ENCODE measurements at regions of chr1 and their contacts with region 1.

Region 1: GRCh38 chr1:44730741-44731512 is at the start of gene RNU5D-1:
- DNase-seq: peak; percentile 91
- ATAC-seq: peak; percentile 84
- H3K4me3 Mint-ChIP-seq: peak within 1 kb of the TSS; percentile 80
- H3K27ac Mint-ChIP-seq: peak within 1 kb of the TSS; percentile 99
- H3K4me1 Mint-ChIP-seq: peaks cover 33% of the 10 kb centered on the region
- H3K27me3 Mint-ChIP-seq: no peaks in the 10 kb centered on the region
- total RNA-seq, gene RNU5D-1: not detected

Region 2: DNA sequence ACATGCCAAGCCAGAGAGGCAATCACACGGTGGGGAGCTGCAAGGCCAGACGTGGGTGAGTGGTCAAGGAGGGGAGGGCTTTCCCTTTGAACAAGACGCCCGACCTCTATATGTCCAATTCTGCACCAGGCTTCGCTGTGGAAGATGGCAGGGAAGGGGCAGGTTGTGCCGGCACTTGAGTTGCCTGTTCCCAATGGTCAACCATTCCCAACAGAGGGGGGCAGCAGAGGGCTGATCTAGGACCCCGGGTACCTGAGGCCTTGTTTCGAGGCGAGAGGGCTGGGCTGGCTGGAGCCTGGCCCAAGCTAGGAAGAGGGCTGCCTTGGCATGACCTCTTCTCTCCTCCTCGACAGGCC is 121.5 kb before region 1 on chr1:
- POLR2A ChIA-PET with region 1: no interaction called
- DNase-seq: no peak
- ATAC-seq: no peak
- H3K4me3 Mint-ChIP-seq: no peak overlapping the region
- H3K27ac Mint-ChIP-seq: no peak overlapping the region
- H3K4me1 Mint-ChIP-seq: no peaks in the 10 kb centered on the region
- H3K27me3 Mint-ChIP-seq: peaks cover 2% of the 10 kb centered on the region

Region 3: GRCh38 chr1:44684525-44684924 is 46.4 kb before region 1 on chr1:
- POLR2A ChIA-PET with region 1: no interaction called
- DNase-seq: no peak
- ATAC-seq: peak; percentile 22
- H3K4me3 Mint-ChIP-seq: no peak overlapping the region
- H3K27ac Mint-ChIP-seq: no peak overlapping the region
- H3K4me1 Mint-ChIP-seq: peaks cover 9% of the 10 kb centered on the region
- H3K27me3 Mint-ChIP-seq: peaks cover 3% of the 10 kb centered on the region

Region 4: DNA sequence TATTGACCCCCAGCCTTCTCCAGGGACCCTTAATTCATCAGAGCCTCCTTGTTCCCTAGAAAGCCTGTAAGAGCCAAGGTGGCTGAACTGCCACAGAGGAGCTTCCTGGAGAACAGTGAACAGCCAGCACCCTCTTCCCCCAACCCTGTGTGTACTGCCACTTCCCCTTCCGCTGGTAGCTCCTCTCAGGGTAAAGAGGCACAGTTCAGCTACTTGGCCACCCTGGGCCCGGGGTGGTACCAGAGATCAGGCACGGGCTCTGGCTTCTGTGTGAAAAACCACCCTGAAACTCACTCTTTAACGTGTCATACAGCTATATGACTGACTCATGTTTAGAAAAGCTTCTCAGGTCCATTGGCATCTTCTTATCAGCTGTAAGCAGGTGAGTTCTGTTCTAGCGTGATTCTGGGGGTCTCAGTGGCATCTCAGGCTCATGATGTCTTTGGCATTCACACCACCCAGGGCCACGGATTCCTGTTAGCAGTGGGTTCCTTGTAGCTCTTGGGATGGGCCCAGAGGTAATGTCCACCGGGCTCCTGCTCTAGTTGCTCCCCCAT is 34.1 kb before region 1 on chr1:
- POLR2A ChIA-PET with region 1: interaction called, 15 read pairs
- DNase-seq: peak; percentile 54
- ATAC-seq: peak; percentile 98
- H3K4me3 Mint-ChIP-seq: peak overlapping the region; percentile 65
- H3K27ac Mint-ChIP-seq: peak overlapping the region; percentile 83
- H3K4me1 Mint-ChIP-seq: peaks cover 25% of the 10 kb centered on the region
- H3K27me3 Mint-ChIP-seq: no peaks in the 10 kb centered on the region

Region 5: GRCh38 chr1:44786138-44786840 is 55.4 kb after region 1 on chr1:
- POLR2A ChIA-PET with region 1: interaction called, 93 read pairs
- DNase-seq: peak; percentile 87
- ATAC-seq: peak; percentile 69
- H3K4me3 Mint-ChIP-seq: peak overlapping the region; percentile 66
- H3K27ac Mint-ChIP-seq: peak overlapping the region; percentile 71
- H3K4me1 Mint-ChIP-seq: peaks cover 26% of the 10 kb centered on the region
- H3K27me3 Mint-ChIP-seq: no peaks in the 10 kb centered on the region

Region 6: GRCh38 chr1:44807262-44808062 is 76.5 kb after region 1 on chr1 and contains the start of gene DYNLT4:
- POLR2A ChIA-PET with region 1: interaction called, 74 read pairs
- DNase-seq: peak; percentile 84
- ATAC-seq: peak; percentile 61
- H3K4me3 Mint-ChIP-seq: peak within 1 kb of the TSS; percentile 78
- H3K27ac Mint-ChIP-seq: peak within 1 kb of the TSS; percentile 99
- H3K4me1 Mint-ChIP-seq: peaks cover 55% of the 10 kb centered on the region
- H3K27me3 Mint-ChIP-seq: no peaks in the 10 kb centered on the region
- total RNA-seq, gene DYNLT4: 0.43 to 0.97 TPM

Region 7: DNA sequence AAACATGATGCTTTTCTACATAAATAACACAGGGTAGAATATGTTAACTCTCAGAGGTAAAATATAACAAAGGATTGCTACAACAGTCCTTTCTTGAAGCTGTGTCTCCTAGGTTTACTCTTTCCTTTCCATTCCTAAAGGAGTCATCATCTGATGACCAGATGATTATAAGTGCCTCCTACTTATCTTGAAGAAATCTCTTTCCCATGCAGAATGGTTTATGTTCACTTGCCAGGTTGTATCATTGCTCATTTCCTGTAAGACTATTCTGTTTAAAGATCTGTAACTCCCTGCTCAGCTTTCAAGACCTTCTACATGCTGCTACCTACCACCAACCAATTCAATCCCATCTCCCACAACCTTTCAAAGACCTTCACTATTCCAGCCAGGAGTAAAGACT is 163.7 kb after region 1 on chr1:
- POLR2A ChIA-PET with region 1: no interaction called
- DNase-seq: no peak
- ATAC-seq: no peak
- H3K4me3 Mint-ChIP-seq: no peak overlapping the region
- H3K27ac Mint-ChIP-seq: no peak overlapping the region
- H3K4me1 Mint-ChIP-seq: no peaks in the 10 kb centered on the region
- H3K27me3 Mint-ChIP-seq: no peaks in the 10 kb centered on the region

Region 8: GRCh38 chr1:45011837-45012638 is 281.1 kb after region 1 on chr1 and contains the start of gene UROD:
- POLR2A ChIA-PET with region 1: interaction called, 49 read pairs
- DNase-seq: peak; percentile 86
- ATAC-seq: peak; percentile 71
- H3K4me3 Mint-ChIP-seq: peak within 1 kb of the TSS; percentile 89
- H3K27ac Mint-ChIP-seq: peak within 1 kb of the TSS; percentile 97
- H3K4me1 Mint-ChIP-seq: peaks cover 29% of the 10 kb centered on the region
- H3K27me3 Mint-ChIP-seq: no peaks in the 10 kb centered on the region
- total RNA-seq, gene UROD: 71.7 to 79.2 TPM

Region 9: GRCh38 chr1:45093334-45093733 is 362.4 kb after region 1 on chr1:
- POLR2A ChIA-PET with region 1: no interaction called
- DNase-seq: no peak
- ATAC-seq: no peak
- H3K4me3 Mint-ChIP-seq: no peak overlapping the region
- H3K27ac Mint-ChIP-seq: no peak overlapping the region
- H3K4me1 Mint-ChIP-seq: no peaks in the 10 kb centered on the region
- H3K27me3 Mint-ChIP-seq: peaks cover 2% of the 10 kb centered on the region

Measured in activated naive CD8-positive, alpha-beta T cell treated with anti-CD3 and anti-CD28 coated beads, Interleukin-2, amount 10 ng/mL, durations not matched to agents 7 days and 5 days (primary cell).